Posterior vena cava (tissue), 2 donors: ENCODE measurements at regions of chr17 and their contacts with region 1.

Region 1: GRCh38 chr17:7515911-7516610 is 31.9 kb downstream of the POLR2A start:
- DNase-seq: no peak

Region 2: GRCh38 chr17:7444682-7445618 is 71.1 kb before region 1 on chr17 and contains the start of gene CHRNB1:
- intact Hi-C with region 1: loop called in 1 of 2 experiments (anchors 10 kb)
- DNase-seq: peak; percentile 91
- total RNA-seq, gene CHRNB1: 7.8 to 10.5 TPM

Region 3: GRCh38 chr17:7561028-7561575 is 45.0 kb after region 1 on chr17:
- intact Hi-C with region 1: loop called in 1 of 2 experiments (anchors 2 kb)
- DNase-seq: peak; percentile 97

Region 4: GRCh38 chr17:7583253-7584109 is 67.4 kb after region 1 on chr17 and contains the start of gene MPDU1:
- intact Hi-C with region 1: no loop called
- DNase-seq: peak; percentile 99
- total RNA-seq, gene MPDU1: 24.7 to 31.2 TPM

Region 5: GRCh38 chr17:8393420-8394241 is 877.6 kb after region 1 on chr17:
- intact Hi-C with region 1: no loop called
- DNase-seq: no peak